WTC11 (cell line): ENCODE measurements at regions of chr10 and their contacts with region 1.

Region 1: GRCh38 chr10:102231357-102232318 is 5.5 kb downstream of the ELOVL3 start:
- DNase-seq: peak; percentile 89
- ATAC-seq: peak; percentile 68
- H3K4me3 Mint-ChIP-seq: peak overlapping the region; percentile 62
- H3K27ac Mint-ChIP-seq: no peak overlapping the region
- H3K4me1 Mint-ChIP-seq: peaks cover 3% of the 10 kb centered on the region; the same call in 1 of the 2 replicates
- H3K27me3 Mint-ChIP-seq: peaks cover 99% of the 10 kb centered on the region
- CTCF ChIP-seq: peak; percentile 94

Region 2: GRCh38 chr10:102245101-102245931 is 13.7 kb after region 1 on chr10 and contains the start of gene GBF1:
- CTCF ChIA-PET with region 1: interaction called, 130 read pairs
- POLR2A ChIA-PET with region 1: interaction called, 7 read pairs
- DNase-seq: peak; percentile 90
- ATAC-seq: peak; percentile 93
- H3K4me3 Mint-ChIP-seq: peak within 1 kb of the TSS; percentile 100
- H3K27ac Mint-ChIP-seq: peak within 1 kb of the TSS; percentile 96
- H3K4me1 Mint-ChIP-seq: peaks cover 38% of the 10 kb centered on the region
- H3K27me3 Mint-ChIP-seq: peaks cover 45% of the 10 kb centered on the region
- CTCF ChIP-seq: no peak
- total RNA-seq, gene GBF1: 29.8 to 32.4 TPM (median 32.1 TPM) in 3 replicates

Region 3: GRCh38 chr10:102268375-102268888 is 36.8 kb after region 1 on chr10:
- CTCF ChIA-PET with region 1: interaction called, 26 read pairs
- POLR2A ChIA-PET with region 1: no interaction called
- DNase-seq: no peak
- ATAC-seq: no peak
- H3K4me3 Mint-ChIP-seq: no peak overlapping the region
- H3K27ac Mint-ChIP-seq: no peak overlapping the region
- H3K4me1 Mint-ChIP-seq: peaks cover 4% of the 10 kb centered on the region; the same call in 1 of the 2 replicates
- H3K27me3 Mint-ChIP-seq: no peaks in the 10 kb centered on the region
- CTCF ChIP-seq: no peak

Region 4: DNA sequence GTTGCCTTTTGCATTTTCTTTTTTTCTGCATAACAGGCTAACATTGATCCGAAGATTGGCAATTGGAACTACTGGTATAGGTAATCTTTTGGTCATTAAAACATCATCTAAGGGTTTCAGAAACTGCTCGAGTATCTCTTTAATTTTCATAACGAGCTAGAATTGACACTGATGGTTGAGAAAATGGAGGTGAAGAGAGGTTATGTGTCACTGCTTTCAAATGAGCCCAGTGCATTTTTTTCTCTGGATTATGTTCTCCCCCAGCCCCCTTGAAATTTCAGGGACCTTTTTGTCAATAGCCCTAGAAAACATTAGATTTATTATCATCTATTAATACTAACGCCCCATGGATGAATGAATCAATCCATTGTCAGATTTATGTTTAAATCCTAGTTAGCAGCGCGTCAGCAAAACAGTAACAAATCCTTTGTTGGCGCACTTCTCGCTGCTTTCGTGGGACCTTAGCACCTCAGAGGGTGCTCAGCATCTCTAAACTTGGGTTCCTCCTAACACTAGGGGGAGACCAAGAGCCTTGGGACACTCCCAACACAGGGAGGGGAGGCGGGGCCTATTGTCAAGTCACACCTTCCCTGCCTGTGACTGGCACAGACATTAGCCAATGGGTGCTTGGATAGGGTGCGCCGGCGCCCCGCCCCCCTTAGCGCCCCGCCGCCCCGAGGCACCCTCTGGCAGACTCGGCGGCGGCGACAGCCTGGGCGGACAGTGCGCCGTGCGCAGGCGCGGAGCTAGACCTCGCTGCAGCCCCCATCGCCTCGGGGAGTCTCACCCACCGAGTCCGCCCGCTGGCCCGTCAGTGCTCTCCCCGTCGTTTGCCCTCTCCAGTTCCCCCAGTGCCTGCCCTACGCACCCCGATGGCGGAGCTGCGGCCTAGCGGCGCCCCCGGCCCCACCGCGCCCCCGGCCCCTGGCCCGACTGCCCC is 271.9 kb after region 1 on chr10 and contains the start of gene SUFU:
- CTCF ChIA-PET with region 1: interaction called, 10 read pairs
- POLR2A ChIA-PET with region 1: interaction called, 4 read pairs
- DNase-seq: peak; percentile 98
- ATAC-seq: peak; percentile 74
- H3K4me3 Mint-ChIP-seq: peak within 1 kb of the TSS; percentile 95
- H3K27ac Mint-ChIP-seq: peak within 1 kb of the TSS; percentile 41; the same call in 1 of the 2 replicates
- H3K4me1 Mint-ChIP-seq: peaks cover 8% of the 10 kb centered on the region; the same call in 1 of the 2 replicates
- H3K27me3 Mint-ChIP-seq: peaks cover 12% of the 10 kb centered on the region
- CTCF ChIP-seq: peak; percentile 70
- total RNA-seq, gene SUFU: 11.6 to 13.1 TPM (median 12.8 TPM) in 3 replicates